ENCODE measurements at regions of chr10 and their contacts with region 1.

Region 1: DNA sequence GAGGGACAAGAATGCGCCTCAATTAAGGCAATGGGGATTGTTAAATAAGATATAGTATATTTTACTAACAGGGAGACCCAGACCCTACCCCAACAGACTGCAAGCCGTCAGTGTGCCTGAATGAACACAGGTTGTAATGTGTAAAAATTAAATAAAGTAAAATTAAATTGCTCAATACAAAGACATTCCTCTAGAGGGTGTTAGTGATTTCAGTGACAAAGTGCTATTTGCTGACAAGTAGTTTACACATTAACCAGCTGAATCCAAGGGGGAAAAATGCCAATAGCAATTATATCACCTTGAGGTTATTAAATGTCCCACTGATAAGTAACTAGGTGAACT is 110.5 kb downstream of the EBF3 start:
- DNase-seq: peak in 1 of 2 experiments; percentile 25
- H3K4me3 ChIP-seq: no peak overlapping the region
- H3K4me1 ChIP-seq: peaks cover 2% of the 10 kb centered on the region; the same call in 1 of the 2 replicates
- H3K27me3 ChIP-seq: no peaks in the 10 kb centered on the region

Region 2: DNA sequence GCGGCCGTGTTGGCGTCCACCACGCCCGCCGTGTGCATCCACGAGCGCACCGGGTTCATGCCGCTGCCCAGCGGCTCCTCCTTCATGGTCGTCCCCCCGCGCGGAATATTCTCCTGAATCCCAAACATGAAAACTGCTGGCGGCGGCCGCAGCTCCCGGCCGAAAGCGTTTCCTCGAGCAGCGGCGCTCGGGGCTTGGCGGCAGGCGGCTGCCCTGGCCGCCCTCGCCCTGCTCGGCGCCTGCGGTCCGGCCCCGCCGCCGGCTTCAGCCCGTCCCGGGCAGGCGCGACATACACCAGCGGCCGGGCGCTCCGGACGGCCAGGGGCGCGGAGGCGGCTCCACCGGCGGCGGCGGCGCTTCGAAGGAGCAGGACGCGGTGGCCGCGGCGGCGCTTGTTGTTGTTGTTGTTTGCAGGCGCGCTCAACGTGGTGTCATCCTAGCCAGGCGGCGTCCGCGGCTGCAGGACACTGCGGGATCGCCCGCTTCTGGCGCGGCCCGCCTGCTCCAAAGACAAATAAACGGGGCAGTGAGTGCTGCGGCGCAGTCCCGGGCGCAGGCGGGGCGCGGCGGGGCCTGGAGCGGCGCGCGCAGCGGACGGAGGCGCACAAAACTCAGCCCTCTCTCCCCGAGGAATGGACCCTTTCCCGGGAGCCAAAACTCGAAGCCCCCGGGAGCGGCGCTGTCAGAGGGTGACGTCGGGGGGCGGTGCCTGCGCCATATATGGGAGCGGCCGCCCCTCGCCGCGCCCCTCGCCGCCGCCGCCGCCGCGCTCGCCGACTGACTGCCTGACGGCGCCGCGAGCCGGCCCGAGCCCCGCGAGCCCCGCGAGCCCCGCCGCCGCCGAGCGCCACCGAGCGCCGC is 110.3 kb after region 1 on chr10 and contains the start of gene EBF3:
- in situ Hi-C with region 1: loop called (anchors 5 kb)
- DNase-seq: peak; percentile 81 to 93
- H3K4me3 ChIP-seq: peak within 1 kb of the TSS; percentile 49
- H3K4me1 ChIP-seq: peaks cover 26% of the 10 kb centered on the region
- H3K27me3 ChIP-seq: no peaks in the 10 kb centered on the region

Region 3: DNA sequence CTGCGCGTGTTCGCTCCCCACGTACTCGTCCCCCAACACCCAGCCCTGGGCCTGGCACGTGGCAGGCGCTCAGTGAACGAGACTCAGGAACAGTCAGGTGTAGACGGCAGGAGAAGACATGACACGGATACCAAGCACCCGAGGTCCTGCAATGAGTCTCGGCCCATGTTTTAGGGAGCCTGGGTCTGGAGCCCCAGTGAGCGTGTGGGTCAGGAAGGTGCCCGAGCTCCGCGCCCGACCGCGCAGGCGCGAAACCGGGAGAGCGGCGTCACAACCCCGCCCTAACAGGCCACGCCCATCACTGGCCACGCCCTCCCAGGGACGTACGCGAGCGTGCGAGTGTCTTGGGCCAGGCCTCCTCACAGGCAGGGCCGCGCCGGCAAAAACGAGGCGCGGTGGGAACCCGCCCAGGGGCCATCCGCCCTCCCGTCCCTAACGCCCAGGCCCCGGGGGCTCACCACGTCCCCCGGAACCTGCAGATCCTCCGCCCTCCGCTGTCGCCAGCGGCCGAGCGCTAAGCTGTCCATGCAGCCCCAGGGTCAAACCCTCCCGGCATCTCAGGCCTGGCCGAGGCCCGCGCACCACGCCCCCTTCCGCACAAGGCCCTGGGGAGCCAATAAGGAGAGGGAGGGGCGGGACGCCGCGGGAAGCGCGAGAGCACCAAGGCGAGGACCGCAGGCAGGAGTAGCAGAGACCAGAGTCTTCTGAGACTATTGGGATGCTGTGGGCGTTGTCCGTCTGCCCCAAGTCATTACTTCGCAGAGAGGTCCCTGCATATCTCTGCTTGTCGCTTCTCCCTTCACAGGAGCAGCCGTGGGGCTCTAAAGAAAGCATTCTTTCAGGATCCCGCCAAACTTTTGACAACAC is 256.9 kb after region 1 on chr10 and contains the start of gene C10orf143:
- in situ Hi-C with region 1: loop called (anchors 25 kb)
- DNase-seq: peak; percentile 91 to 97
- H3K4me3 ChIP-seq: peak within 1 kb of the TSS; percentile 68
- H3K4me1 ChIP-seq: peaks cover 8% of the 10 kb centered on the region
- H3K27me3 ChIP-seq: no peaks in the 10 kb centered on the region

Measured in HAP-1 (cell line).